ENCODE measurements at regions of chr10 and their contacts with region 1.

Region 1: DNA sequence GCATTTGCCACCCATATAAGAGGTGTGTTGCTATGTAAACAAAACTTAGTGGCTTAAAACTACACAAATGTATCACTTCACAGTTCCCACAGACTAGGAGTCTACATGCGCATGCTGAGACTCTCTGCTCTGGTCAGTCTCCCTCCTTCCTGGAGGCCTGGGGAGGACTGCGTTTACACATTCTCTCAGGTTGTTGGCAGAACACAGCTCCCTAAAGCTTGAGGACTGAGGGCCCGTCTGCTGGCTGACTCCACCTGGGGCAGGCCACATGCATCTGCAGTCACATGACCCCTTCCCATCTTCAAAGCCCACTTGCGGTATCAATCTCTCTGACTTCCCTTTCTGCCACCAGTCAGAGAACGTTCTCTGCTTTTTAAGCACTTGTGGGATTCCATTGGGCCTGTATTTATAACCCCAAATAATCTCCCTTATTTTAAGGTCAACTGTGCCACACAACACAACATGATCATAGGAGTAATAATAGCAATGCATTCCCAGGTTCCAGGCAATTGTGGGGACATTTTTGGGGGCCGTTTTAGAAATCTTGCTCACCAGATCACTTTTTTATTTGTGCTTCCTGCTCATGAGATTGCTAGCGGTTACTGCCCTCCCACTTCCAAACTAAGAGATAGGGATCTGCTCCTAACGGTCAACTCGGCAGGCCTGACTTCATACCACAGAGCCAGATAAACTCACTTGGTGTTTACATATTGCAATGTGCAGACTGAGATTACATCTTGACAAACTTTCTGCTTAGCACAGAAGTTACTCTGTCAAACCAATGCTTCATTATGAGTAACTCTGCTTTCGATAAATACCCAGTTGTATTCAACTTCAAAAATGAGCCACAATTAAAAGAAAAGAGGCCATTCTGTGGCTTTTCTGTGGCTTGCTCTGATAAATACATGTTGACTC is 96.3 kb downstream of the ALOX5 start:
- DNase-seq: no peak
- H3K4me3 ChIP-seq: peak overlapping the region; percentile 3
- H3K27ac ChIP-seq: peak overlapping the region; percentile 63
- H3K4me1 ChIP-seq: peaks cover 39% of the 10 kb centered on the region
- H3K27me3 ChIP-seq: no peaks in the 10 kb centered on the region
- CTCF ChIP-seq: no peak

Region 2: DNA sequence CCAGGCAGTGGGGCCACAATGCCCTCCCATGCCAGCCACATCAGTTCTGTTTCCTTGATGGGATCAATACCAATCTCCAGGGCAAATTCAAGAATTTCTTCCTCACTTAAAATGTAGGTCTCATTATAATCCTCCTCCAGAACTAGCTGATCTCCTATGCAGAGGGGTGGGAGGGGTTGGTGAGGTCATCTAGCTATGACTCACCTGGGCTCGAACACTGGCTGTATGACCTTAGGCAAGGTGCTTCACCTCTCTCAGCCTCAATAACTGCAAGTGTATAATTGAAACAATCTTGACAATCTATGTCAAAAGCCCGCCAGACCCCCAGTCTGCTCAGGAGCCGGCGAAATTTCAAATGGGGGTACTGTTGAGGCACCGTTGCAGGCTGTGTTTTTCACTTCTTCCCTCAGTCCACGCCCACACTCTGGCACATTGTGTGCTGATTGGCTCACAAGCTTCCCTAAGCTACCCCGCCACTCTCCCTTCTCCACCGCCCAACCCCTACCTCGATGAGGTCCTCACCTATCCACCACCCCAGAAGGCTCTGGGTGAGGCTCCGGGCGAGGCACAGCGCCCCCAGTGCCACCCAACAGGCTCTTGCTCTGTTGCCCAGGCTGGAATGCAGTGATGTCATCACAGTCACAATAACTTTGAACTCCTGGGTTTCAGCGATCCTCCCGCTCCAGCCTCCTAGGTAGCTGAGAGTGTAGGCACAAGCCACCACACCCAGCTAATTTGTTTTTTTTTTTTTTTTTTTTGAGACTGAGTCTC is 399.1 kb before region 1 on chr10:
- intact Hi-C with region 1: no loop called
- DNase-seq: no peak
- H3K4me3 ChIP-seq: no peak overlapping the region
- H3K27ac ChIP-seq: no peak overlapping the region
- H3K4me1 ChIP-seq: no peaks in the 10 kb centered on the region
- H3K27me3 ChIP-seq: peaks cover 7% of the 10 kb centered on the region
- CTCF ChIP-seq: no peak

Region 3: DNA sequence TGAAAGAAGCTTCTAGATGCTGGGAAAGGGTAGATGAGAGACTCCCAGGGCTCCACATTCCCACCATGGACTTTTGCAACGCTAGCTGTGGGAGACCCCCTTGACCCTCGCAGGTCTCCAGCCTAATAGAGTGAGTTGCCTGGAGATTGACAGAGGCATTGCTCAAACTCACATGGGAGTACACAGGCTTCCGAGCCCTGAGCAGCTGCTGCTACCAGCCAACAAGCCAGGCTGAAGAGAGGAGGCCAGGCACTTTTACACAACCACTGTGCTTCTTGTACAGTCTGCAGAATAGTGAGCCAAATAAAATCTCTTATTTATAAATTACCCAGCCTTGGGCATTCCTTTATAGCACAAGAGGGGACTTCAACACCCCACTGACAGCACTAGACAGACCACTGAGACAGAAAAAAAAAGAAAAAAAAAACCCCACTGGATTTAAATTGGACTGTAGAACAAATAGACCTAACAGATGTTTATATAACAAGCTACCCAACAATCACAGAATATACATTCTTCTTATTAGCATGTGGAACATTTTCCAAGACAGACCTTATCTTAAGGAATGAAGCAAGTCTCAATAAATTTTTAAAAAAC is 56.1 kb after region 1 on chr10:
- intact Hi-C with region 1: loop called (anchors 10 kb)
- DNase-seq: no peak
- H3K4me3 ChIP-seq: no peak overlapping the region
- H3K27ac ChIP-seq: no peak overlapping the region
- H3K4me1 ChIP-seq: peaks cover 8% of the 10 kb centered on the region
- H3K27me3 ChIP-seq: no peaks in the 10 kb centered on the region
- CTCF ChIP-seq: no peak

Measured in left ventricle myocardium inferior (tissue), 1 donor.